OCI-LY7 (cell line): ENCODE measurements at regions of chr21 and their contacts with region 1.

Region 1: GRCh38 chr21:15631366-15631765 is 98.4 kb upstream of the USP25 start:
- DNase-seq: no peak
- H3K4me3 ChIP-seq: no peak overlapping the region
- H3K27ac ChIP-seq: no peak overlapping the region
- H3K4me1 ChIP-seq: no peaks in the 10 kb centered on the region
- CTCF ChIP-seq: no peak

Region 2: DNA sequence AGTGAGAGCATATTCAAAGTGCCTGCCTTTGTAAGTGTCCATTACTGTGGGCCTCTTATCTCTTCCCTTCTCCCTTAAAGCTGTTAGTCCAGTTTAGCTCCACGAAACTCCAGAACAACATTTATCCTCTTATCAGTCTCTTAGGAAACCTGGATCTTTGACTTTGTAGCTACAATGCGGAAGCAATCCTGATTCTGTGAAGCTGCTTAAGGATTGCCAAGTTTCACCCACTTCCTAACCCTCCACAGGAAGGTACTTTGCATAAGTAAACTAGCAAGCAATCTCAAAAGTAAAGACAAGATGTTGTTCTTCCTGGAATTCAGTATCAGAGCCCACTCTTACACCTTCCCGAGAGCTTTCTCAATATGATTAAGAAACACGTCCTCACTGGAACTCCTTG is 66.5 kb before region 1 on chr21:
- CTCF ChIA-PET with region 1: no interaction called
- POLR2A ChIA-PET with region 1: no interaction called
- intact Hi-C with region 1: no loop called
- DNase-seq: no peak
- H3K4me3 ChIP-seq: no peak overlapping the region
- H3K27ac ChIP-seq: no peak overlapping the region
- H3K4me1 ChIP-seq: no peaks in the 10 kb centered on the region
- CTCF ChIP-seq: no peak

Region 3: DNA sequence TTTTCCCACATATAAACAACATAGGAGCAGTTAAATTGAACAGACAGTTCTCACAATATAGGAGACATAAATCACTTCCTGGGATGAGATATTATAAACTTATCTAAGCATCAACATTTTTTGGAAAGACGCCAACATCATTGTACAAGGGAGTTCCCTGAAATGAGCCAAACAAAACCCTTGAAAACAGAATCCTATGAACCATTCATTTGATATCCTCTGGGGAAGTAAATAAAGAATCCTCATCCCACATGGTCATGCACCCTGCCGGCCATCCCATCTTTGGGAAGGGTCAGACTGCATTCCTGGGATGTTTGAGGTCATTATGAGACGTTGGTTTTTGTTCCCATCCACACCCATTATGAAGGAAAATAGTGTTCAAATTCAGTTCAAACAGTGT is 13.4 kb before region 1 on chr21:
- CTCF ChIA-PET with region 1: no interaction called
- POLR2A ChIA-PET with region 1: interaction called, 10 read pairs
- intact Hi-C with region 1: no loop called
- DNase-seq: no peak
- H3K4me3 ChIP-seq: no peak overlapping the region
- H3K27ac ChIP-seq: no peak overlapping the region
- H3K4me1 ChIP-seq: no peaks in the 10 kb centered on the region
- CTCF ChIP-seq: no peak

Region 4: DNA sequence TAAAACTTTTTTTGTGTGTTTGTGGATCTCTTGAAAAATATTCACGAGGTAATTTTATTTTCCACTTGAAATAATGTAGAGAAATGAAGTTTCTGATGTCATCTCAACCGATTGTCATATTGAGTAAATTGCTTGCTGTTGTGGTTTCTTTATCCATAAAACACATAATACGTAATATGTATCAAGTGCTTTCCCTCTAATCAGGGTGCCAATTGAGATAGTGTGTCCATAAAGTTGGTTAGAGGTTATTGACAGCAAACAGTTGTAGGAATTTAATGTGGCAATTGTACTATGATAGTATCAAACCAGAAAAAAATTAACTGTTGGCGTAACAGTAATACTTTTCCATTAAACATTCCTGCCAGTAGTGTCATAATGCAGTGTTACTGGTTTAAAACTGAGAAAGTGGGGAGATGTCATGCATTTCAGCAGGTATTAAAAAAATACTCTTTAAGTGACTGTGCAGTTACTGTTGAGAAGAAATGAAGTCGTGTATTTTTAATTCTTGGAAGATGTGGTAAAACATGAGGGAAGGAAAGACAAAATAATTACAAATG is 136.8 kb after region 1 on chr21:
- CTCF ChIA-PET with region 1: no interaction called
- POLR2A ChIA-PET with region 1: no interaction called
- intact Hi-C with region 1: no loop called
- DNase-seq: no peak
- H3K4me3 ChIP-seq: no peak overlapping the region
- H3K27ac ChIP-seq: no peak overlapping the region
- H3K4me1 ChIP-seq: no peaks in the 10 kb centered on the region
- CTCF ChIP-seq: no peak